Left colon (tissue), 2 donors: ENCODE measurements at regions of chr19 and their contacts with region 1.

Region 1: DNA sequence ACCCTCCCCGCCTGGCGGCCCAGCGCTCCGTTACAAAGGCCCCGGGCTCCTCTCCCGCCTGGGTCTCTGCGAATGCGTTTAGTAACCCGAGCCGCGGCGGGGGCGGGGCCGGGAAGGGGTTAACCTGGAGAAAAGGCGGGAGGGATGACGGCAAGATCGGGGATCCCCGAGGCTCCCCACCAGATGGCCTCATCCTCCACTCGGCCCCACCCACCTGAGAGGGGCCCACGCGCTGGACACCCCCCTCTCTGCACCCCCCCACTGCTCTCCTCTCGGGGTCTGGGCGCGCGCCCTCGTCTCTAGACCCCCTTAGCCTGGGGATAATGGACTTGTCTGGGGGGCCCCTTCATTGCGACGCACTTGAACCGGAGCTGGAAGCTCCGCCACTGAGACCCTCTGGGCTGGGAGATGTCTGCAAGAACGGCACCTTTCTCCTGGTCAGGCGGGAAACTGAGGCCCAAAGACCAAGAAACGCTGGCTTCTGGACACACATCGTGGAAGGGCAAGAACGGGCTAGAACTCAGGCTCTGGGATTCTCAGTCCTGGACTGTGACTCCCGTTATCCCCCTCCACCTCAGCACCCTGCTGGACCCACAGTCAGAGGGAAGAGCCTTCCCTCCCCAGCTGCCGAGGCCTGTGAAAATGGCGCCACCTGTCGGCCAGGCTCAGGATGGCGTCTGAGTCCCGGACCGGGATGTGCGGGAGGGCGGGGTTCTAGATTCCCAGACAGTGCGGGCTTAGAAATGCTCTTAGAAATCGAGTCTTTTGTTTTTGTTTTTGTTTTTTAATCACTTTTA is 2.9 kb upstream of the LTBP4 start:
- DNase-seq: peak; percentile 75 to 91
- ATAC-seq: peak; percentile 60

Region 2: GRCh38 chr19:40378509-40378908 is 219.8 kb before region 1 on chr19:
- intact Hi-C with region 1: no loop called
- DNase-seq: no peak
- ATAC-seq: no peak

Region 3: DNA sequence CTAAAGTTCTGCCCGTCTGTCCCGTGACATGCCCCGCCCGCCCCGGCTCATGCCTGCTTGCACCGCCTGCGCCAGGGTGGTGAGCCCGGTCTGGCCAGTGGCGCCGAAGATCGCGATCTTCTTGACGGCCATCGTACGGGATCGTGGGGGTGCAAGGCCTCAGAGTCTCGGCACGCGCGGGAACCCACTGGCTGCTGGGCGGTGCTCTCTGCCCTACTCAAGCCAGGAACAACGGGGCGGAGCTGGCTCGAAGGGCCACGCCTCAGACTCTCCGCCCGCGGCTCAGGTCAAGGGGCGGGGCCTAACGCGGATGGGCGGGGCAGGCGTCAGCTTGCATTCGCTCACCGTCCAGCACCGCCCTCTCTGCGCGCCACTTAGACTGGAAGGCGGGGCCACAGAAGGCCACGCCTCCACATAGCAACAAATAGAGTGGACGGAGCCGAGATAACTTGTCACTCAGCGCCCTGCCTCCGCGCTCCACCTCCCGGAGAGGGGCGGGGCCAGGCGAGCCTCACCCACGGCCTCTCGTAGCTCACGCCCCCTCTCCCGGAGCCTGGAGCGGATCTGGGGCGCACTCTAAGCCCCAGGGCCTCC is 132.7 kb before region 1 on chr19 and contains the start of gene BLVRB:
- intact Hi-C with region 1: loop called in 1 of 2 experiments (anchors 5 kb)
- DNase-seq: peak; percentile 99 to 100
- ATAC-seq: peak; percentile 88
- total RNA-seq, gene BLVRB: 77.4 to 79.6 TPM

Region 4: DNA sequence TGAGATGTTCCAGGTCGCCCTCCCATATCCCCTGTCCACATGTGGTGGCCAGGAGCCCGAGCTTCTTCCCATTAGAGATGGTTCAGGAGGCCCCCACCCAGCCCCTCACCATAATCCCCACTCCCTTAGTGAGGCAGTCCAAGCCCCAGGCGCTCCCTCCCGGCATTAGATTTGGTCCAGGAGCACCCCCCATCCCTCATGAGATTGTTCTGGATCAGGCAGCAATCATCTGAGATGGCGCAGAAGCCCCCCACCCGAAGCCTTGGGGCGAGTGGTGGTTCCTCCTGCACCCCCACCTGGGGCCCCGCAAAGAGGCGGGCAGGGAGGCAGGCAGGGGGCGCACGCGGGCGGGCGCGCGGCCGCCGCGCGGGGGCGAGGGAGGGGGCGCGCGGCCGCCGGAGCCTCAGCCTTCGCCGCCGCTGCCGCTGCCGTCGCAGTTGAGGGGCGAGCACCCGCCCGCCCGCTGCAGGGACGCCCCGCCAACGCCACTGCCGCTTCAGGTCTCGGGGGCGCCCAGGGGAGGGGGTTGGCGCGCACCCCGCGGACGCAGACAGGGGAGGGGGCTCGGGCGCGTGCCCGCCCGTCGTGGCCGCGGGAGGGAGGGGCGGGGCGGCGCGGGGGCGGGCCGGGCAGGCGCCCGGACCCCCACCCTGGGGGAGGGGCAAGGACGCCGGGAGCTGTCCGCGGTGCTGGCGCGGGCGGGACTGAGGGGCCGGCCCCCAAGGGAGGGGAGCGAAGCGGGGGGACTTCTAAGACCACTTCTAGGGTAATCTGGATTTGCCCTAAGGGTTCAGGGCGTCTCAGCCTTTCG is 68.0 kb before region 1 on chr19:
- intact Hi-C with region 1: loop called in 1 of 2 experiments (anchors 10 kb)
- DNase-seq: no peak
- ATAC-seq: no peak

Region 5: GRCh38 chr19:40690693-40691420 is 92.5 kb after region 1 on chr19:
- intact Hi-C with region 1: no loop called
- DNase-seq: peak; percentile 93 to 98
- ATAC-seq: peak; percentile 94